CD4-positive, alpha-beta T cell (primary cell): ENCODE measurements at regions of chr14 and their contacts with region 1.

Region 1: GRCh38 chr14:69153131-69153872 is 383 bp upstream of the DCAF5 start:
- DNase-seq: peak; percentile 87 to 98 (median 93)
- ATAC-seq: peak; percentile 93
- H3K4me3 ChIP-seq: peak overlapping the region; percentile 98
- H3K4me3 Mint-ChIP-seq: peak overlapping the region; percentile 99
- H3K27ac ChIP-seq: peak overlapping the region; percentile 36 to 55
- H3K27ac Mint-ChIP-seq: peak overlapping the region; percentile 94
- H3K4me1 ChIP-seq: peaks cover 27% of the 10 kb centered on the region
- H3K4me1 Mint-ChIP-seq: peaks cover 36% of the 10 kb centered on the region
- H3K27me3 ChIP-seq: no peaks in the 10 kb centered on the region
- H3K27me3 Mint-ChIP-seq: peaks cover 3% of the 10 kb centered on the region
- CTCF ChIP-seq: no peak

Region 2: DNA sequence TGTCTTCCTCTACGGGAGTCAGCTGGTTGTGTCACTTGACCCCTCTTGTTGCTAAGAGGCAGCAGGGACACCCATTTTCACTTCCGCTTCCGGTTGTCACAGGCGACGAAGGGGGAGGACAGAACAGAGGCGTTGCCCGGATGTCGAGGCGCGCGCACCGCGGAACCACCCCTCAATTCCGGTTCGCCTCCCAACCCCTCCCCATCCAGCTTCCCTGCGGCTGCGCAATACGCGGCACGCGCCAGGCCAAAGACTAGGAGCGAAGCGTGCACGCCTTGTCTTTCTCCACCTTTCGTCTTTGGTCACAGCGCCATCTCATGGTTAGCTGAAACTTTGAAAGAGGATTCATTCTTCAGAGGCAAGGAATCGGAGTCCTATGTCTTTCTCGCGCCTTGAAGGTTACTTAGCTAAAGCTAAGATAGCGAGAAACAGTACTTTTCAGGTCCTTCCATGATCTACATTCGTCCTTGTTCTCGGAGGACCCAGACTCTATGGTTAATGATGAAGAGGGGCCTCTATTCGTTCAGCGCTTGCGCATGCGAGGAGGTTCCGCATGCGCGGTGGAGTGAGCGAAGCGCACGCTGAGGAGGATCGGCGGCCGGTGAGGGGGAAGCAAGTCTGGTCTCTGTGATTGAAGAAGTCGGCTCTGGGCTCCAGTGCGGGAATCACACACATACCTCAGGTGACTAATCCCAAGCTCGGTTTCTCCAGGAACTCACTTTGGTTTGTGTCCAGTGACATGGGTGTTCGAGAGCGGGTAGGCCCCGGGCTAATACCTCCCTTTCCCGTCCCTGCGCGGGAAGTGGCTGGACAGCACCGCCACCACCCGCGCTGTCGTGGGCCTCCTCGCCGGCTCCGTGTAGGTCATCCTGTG is 1793.3 kb before region 1 on chr14 and contains the starts of genes ATP6V1D and EIF2S1:
- CTCF ChIA-PET with region 1: no interaction called
- POLR2A ChIA-PET with region 1: interaction called, 3 read pairs
- intact Hi-C with region 1: loop called in 1 of 2 experiments (anchors 5 kb)
- DNase-seq: peak; percentile 98 to 100 (median 99)
- ATAC-seq: peak; percentile 90
- H3K4me3 ChIP-seq: peak within 1 kb of the TSS; percentile 88
- H3K4me3 Mint-ChIP-seq: peak within 1 kb of the TSS; percentile 95
- H3K27ac ChIP-seq: peak within 1 kb of the TSS; percentile 87 to 99
- H3K27ac Mint-ChIP-seq: peak within 1 kb of the TSS; percentile 93
- H3K4me1 ChIP-seq: peaks cover 30% of the 10 kb centered on the region
- H3K4me1 Mint-ChIP-seq: peaks cover 87% of the 10 kb centered on the region
- H3K27me3 ChIP-seq: no peaks in the 10 kb centered on the region
- H3K27me3 Mint-ChIP-seq: no peaks in the 10 kb centered on the region
- CTCF ChIP-seq: peak; percentile 100
- total RNA-seq, gene ATP6V1D: 25.2 to 36.2 TPM
- total RNA-seq, gene EIF2S1: 23.1 to 28.8 TPM

Region 3: DNA sequence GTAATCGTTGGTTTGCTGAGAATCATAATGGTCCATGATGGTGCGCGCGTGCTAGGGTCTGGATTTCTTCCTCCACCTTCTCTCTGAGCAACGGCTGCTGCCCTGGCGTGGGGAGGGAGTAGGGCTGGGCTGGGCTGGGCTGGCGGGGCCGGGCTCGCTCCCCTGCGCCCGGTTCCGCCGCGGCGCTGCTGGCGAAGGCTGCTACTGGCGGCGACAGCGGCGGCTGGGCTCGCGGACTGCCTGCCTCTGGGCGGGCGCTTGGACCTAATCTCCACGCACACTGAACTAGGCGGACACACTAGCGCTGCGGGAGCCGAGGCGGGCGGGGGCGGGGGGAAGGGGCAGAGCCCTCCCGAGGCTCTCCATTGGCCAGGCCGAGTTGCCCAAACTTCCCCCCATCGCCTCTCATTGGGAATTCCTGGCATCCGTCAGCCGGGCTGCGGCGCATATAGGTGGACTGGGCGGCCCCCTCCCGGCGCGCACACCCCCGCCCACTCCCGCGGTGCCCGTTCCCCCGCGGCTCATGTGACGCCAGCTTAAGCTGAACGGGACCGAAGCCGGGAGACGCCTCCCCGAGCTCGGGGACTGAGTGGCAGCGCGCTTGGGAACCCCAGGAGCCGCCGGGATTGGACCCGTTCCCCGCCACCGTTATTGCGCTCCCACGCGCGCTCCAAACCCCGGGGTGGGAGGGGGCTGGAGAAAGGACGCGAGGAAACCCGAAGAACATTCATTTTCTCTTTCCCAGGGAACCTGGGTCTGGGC is 174.1 kb before region 1 on chr14 and contains the start of gene ACTN1:
- CTCF ChIA-PET with region 1: no interaction called
- POLR2A ChIA-PET with region 1: no interaction called
- intact Hi-C with region 1: loop called in 1 of 2 experiments (anchors 5 kb)
- DNase-seq: peak in 13 of 14 experiments; percentile 31 to 88 (median 57)
- ATAC-seq: peak; percentile 56
- H3K4me3 ChIP-seq: peak within 1 kb of the TSS; percentile 93
- H3K4me3 Mint-ChIP-seq: peak within 1 kb of the TSS; percentile 99
- H3K27ac ChIP-seq: peak within 1 kb of the TSS; percentile 22 to 78
- H3K27ac Mint-ChIP-seq: peak within 1 kb of the TSS; percentile 97
- H3K4me1 ChIP-seq: peaks cover 47% of the 10 kb centered on the region
- H3K4me1 Mint-ChIP-seq: peaks cover 51% of the 10 kb centered on the region
- H3K27me3 ChIP-seq: no peaks in the 10 kb centered on the region
- H3K27me3 Mint-ChIP-seq: no peaks in the 10 kb centered on the region
- CTCF ChIP-seq: no peak
- total RNA-seq, gene ACTN1: 128 to 143 TPM

Region 4: GRCh38 chr14:69129264-69129880 is 23.9 kb before region 1 on chr14:
- CTCF ChIA-PET with region 1: interaction called, 62 read pairs
- POLR2A ChIA-PET with region 1: interaction called, 8 read pairs
- intact Hi-C with region 1: loop called (anchors 2 kb)
- DNase-seq: peak; percentile 53 to 90 (median 66)
- ATAC-seq: peak; percentile 92
- H3K4me3 ChIP-seq: no peak overlapping the region
- H3K4me3 Mint-ChIP-seq: peak overlapping the region; percentile 22
- H3K27ac ChIP-seq: no peak overlapping the region
- H3K27ac Mint-ChIP-seq: peak overlapping the region; percentile 61
- H3K4me1 ChIP-seq: peaks cover 17% of the 10 kb centered on the region
- H3K4me1 Mint-ChIP-seq: peaks cover 86% of the 10 kb centered on the region
- H3K27me3 ChIP-seq: no peaks in the 10 kb centered on the region
- H3K27me3 Mint-ChIP-seq: no peaks in the 10 kb centered on the region
- CTCF ChIP-seq: peak; percentile 93

Region 5: GRCh38 chr14:69242311-69243224 is 89.3 kb after region 1 on chr14:
- CTCF ChIA-PET with region 1: interaction called, 3 read pairs
- POLR2A ChIA-PET with region 1: no interaction called
- intact Hi-C with region 1: loop called in 1 of 2 experiments (anchors 5 kb)
- DNase-seq: peak in 13 of 14 experiments; percentile 7 to 74 (median 37)
- ATAC-seq: peak; percentile 77
- H3K4me3 ChIP-seq: no peak overlapping the region
- H3K4me3 Mint-ChIP-seq: no peak overlapping the region
- H3K27ac ChIP-seq: no peak overlapping the region
- H3K27ac Mint-ChIP-seq: no peak overlapping the region
- H3K4me1 ChIP-seq: no peaks in the 10 kb centered on the region
- H3K4me1 Mint-ChIP-seq: peaks cover 6% of the 10 kb centered on the region
- H3K27me3 ChIP-seq: no peaks in the 10 kb centered on the region
- H3K27me3 Mint-ChIP-seq: no peaks in the 10 kb centered on the region
- CTCF ChIP-seq: peak; percentile 91

Region 6: GRCh38 chr14:69637503-69638030 is 484.3 kb after region 1 on chr14:
- CTCF ChIA-PET with region 1: no interaction called
- POLR2A ChIA-PET with region 1: no interaction called
- intact Hi-C with region 1: loop called in 1 of 2 experiments (anchors 10 kb)
- DNase-seq: no peak
- ATAC-seq: no peak
- H3K4me3 ChIP-seq: no peak overlapping the region
- H3K4me3 Mint-ChIP-seq: peak overlapping the region; percentile 77
- H3K27ac ChIP-seq: peak overlapping the region in 1 of 2 donors; percentile 76
- H3K27ac Mint-ChIP-seq: peak overlapping the region; percentile 85
- H3K4me1 ChIP-seq: peaks cover 63% of the 10 kb centered on the region
- H3K4me1 Mint-ChIP-seq: peaks cover 86% of the 10 kb centered on the region
- H3K27me3 ChIP-seq: no peaks in the 10 kb centered on the region
- H3K27me3 Mint-ChIP-seq: no peaks in the 10 kb centered on the region
- CTCF ChIP-seq: no peak

Region 7: GRCh38 chr14:70359181-70360090 is 1206.1 kb after region 1 on chr14 and contains the start of gene COX16:
- CTCF ChIA-PET with region 1: interaction called, 3 read pairs
- POLR2A ChIA-PET with region 1: no interaction called
- intact Hi-C with region 1: loop called in 1 of 2 experiments (anchors 10 kb)
- DNase-seq: peak; percentile 63 to 92 (median 74)
- ATAC-seq: peak; percentile 95
- H3K4me3 ChIP-seq: peak within 1 kb of the TSS; percentile 74
- H3K4me3 Mint-ChIP-seq: peak within 1 kb of the TSS; percentile 97
- H3K27ac ChIP-seq: peak within 1 kb of the TSS; percentile 32 to 53
- H3K27ac Mint-ChIP-seq: peak within 1 kb of the TSS; percentile 91
- H3K4me1 ChIP-seq: peaks cover 21% of the 10 kb centered on the region
- H3K4me1 Mint-ChIP-seq: peaks cover 53% of the 10 kb centered on the region
- H3K27me3 ChIP-seq: no peaks in the 10 kb centered on the region
- H3K27me3 Mint-ChIP-seq: no peaks in the 10 kb centered on the region
- CTCF ChIP-seq: no peak
- total RNA-seq, gene COX16: 11.7 to 13.3 TPM